ENCODE measurements at regions of chr16 and their contacts with region 1.

Region 1: GRCh38 chr16:82639666-82640336 is 13.0 kb downstream of the CDH13 start:
- DNase-seq: peak; percentile 61
- H3K4me3 Mint-ChIP-seq: no peak overlapping the region
- H3K27ac Mint-ChIP-seq: no peak overlapping the region
- H3K4me1 Mint-ChIP-seq: peaks cover 28% of the 10 kb centered on the region
- H3K27me3 Mint-ChIP-seq: no peaks in the 10 kb centered on the region

Region 2: GRCh38 chr16:82653550-82654511 is 14.0 kb after region 1 on chr16:
- CTCF ChIA-PET with region 1: interaction called, 39 read pairs
- POLR2A ChIA-PET with region 1: interaction called, 15 read pairs
- DNase-seq: peak; percentile 66
- H3K4me3 Mint-ChIP-seq: peak overlapping the region; percentile 47
- H3K27ac Mint-ChIP-seq: peak overlapping the region; percentile 97
- H3K4me1 Mint-ChIP-seq: peaks cover 95% of the 10 kb centered on the region
- H3K27me3 Mint-ChIP-seq: no peaks in the 10 kb centered on the region

Region 3: GRCh38 chr16:82671741-82672140 is 31.9 kb after region 1 on chr16:
- CTCF ChIA-PET with region 1: interaction called, 20 read pairs
- POLR2A ChIA-PET with region 1: no interaction called
- DNase-seq: peak; percentile 41
- H3K4me3 Mint-ChIP-seq: no peak overlapping the region
- H3K27ac Mint-ChIP-seq: no peak overlapping the region
- H3K4me1 Mint-ChIP-seq: no peaks in the 10 kb centered on the region
- H3K27me3 Mint-ChIP-seq: peaks cover 3% of the 10 kb centered on the region